GM10248 (cell line): ENCODE measurements at regions of chr22 and their contacts with region 1.

Region 1: GRCh38 chr22:35150183-35151107 is 84.5 kb downstream of the ISX start:
- DNase-seq: peak; percentile 64
- CTCF ChIP-seq: peak; percentile 86

Region 2: GRCh38 chr22:35014812-35015211 is 135.6 kb before region 1 on chr22:
- CTCF ChIA-PET with region 1: interaction called, 38 read pairs
- POLR2A ChIA-PET with region 1: no interaction called
- DNase-seq: no peak
- CTCF ChIP-seq: no peak

Region 3: GRCh38 chr22:35043252-35043931 is 107.1 kb before region 1 on chr22:
- CTCF ChIA-PET with region 1: interaction called, 80 read pairs
- POLR2A ChIA-PET with region 1: no interaction called
- DNase-seq: peak; percentile 39
- CTCF ChIP-seq: peak; percentile 59

Region 4: DNA sequence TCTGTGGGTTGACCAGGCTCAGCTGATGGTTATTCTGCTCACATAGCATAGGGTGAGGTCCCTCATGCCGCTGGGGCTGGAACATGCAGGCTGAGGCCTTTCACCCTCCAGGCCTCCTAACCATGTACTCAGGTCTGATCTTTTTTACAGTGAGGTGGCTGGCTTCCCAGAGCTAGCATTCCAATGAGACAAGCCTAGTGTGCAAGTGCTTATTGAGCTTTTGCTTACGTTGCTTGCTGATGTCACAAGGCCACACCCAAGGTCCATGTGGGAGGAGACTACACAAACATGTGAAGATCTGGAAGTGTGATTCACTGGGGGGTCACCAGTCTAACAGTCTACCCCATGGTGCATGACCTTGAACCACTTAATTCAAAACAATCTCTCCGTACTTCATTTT is 50.6 kb before region 1 on chr22:
- CTCF ChIA-PET with region 1: interaction called, 11 read pairs
- POLR2A ChIA-PET with region 1: no interaction called
- DNase-seq: no peak
- CTCF ChIP-seq: no peak

Region 5: DNA sequence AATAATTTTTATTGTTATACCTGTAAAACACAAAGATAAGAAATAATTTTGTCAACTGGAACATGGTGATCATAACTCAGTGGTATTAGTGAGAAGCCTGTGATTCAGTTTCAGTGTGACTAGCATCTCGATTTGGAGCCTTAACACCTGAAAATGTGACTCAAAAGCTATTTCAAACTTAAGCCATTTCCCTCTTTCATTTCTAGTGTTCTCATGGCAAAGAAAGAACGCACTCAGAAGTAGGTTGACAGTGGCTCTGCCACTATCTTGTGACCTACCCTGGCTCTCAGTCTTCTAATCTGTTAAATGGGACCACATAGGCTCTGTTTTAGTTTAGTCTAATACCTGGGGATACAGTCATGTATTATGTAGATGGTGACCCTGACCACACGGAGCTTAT is 21.8 kb before region 1 on chr22:
- CTCF ChIA-PET with region 1: interaction called, 73 read pairs
- POLR2A ChIA-PET with region 1: interaction called, 6 read pairs
- DNase-seq: peak; percentile 68
- CTCF ChIP-seq: no peak